ENCODE measurements at regions of chr16 and their contacts with region 1.

Region 1: GRCh38 chr16:62256406-62256805 is 220.2 kb upstream of the CDH8 start:
- DNase-seq: no peak
- H3K4me3 ChIP-seq: no peak overlapping the region
- H3K27ac ChIP-seq: no peak overlapping the region
- H3K4me1 ChIP-seq: peaks cover 0 to 7% (median under 1%) of the 10 kb centered on the region in 4 experiments; a peak in 3 of 7 replicates
- H3K27me3 ChIP-seq: no peaks in the 10 kb centered on the region; a peak in 1 of 7 replicates
- CTCF ChIP-seq: peak in 2 of 3 experiments; percentile 45 to 46; a peak in 3 of 4 replicates
- EP300 ChIP-seq: no peak
- POLR2A ChIP-seq: no peak
- RAD21 ChIP-seq: peak; percentile 30 to 48

Region 2: DNA sequence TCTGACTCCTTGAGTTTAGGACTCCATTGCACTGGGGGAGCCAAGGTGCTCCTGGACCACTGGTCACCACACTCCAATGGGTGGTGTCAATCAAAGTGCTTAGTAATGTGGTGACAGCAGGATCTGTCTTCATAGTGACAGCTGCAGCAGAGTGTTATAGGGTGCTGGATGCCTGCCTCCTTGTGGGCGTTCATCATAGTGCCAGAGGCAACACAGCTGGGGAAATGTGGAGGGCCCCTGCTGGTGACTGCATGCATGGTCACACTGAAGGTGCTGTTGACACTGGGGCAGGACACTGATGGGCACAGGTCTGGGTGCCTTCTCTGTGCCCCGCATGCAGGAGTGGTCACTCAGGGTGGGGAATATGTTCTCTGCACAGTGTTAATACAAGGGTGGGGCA is 42.6 kb before region 1 on chr16:
- CTCF ChIA-PET with region 1: interaction called, 10 read pairs
- POLR2A ChIA-PET with region 1: no interaction called
- DNase-seq: peak; percentile 29 to 60
- H3K4me3 ChIP-seq: no peak overlapping the region
- H3K27ac ChIP-seq: no peak overlapping the region
- H3K4me1 ChIP-seq: no peaks in the 10 kb centered on the region
- H3K27me3 ChIP-seq: no peaks in the 10 kb centered on the region
- CTCF ChIP-seq: peak; percentile 98 to 99 (median 99)
- EP300 ChIP-seq: no peak
- POLR2A ChIP-seq: no peak
- RAD21 ChIP-seq: peak; percentile 64 to 74

Region 3: DNA sequence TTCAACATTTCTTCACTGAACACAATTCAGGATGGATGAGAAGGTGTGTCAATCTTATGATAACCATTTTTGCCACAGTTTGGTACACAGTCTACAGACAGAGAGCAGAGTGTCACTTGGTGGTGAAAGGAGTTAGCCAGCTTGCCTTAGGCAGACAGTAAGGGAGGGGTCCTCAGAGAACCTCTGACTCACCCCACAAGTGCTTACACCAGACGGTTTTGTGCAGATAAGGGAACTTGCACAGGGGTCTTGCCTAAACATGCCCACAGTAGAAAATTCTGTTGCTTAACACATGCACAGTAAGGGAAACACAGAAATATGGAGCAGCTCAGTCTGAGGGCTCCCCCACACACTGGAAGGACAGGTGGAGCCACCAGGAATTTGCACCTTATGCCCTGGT is 15.7 kb before region 1 on chr16:
- CTCF ChIA-PET with region 1: interaction called, 19 read pairs
- POLR2A ChIA-PET with region 1: no interaction called
- DNase-seq: no peak
- H3K4me3 ChIP-seq: no peak overlapping the region
- H3K27ac ChIP-seq: no peak overlapping the region
- H3K4me1 ChIP-seq: peaks cover 0 to 10% (median 8%) of the 10 kb centered on the region in 4 experiments; a peak in 6 of 7 replicates
- H3K27me3 ChIP-seq: no peaks in the 10 kb centered on the region
- CTCF ChIP-seq: no peak
- EP300 ChIP-seq: no peak
- POLR2A ChIP-seq: no peak
- RAD21 ChIP-seq: no peak